Heart left ventricle (tissue), 16 donors: ENCODE measurements at regions of chr19 and their contacts with region 1.

Region 1: DNA sequence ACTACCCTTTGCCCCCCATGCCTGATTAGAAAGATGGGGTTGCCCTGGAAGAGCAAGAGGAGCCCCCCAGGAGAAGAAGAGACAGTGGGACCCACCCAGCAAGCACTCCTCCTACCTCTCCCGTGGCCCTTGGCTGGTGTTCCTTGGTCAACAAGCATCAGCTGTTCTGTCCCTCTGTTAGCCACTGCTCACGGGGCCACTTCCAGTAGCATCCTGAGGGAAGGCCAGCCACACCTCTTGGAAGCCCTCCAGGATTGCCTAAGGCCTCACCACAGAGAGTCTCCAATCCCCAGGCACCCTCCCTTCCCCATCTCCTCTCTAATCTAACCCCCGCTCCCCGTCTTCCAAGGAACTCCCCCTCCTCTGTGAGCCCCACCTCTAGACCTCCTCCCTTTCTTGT is 15.1 kb upstream of the DPP9 start:
- DNase-seq: no peak
- ATAC-seq: peak in 1 of 4 donors; percentile 27
- H3K4me3 ChIP-seq: no peak overlapping the region
- H3K27ac ChIP-seq: no peak overlapping the region
- H3K4me1 ChIP-seq: peaks cover 0 to 14% (median 0%) of the 10 kb centered on the region in 12 donors
- H3K27me3 ChIP-seq: no peaks in the 10 kb centered on the region
- CTCF ChIP-seq: no peak
- POLR2A ChIP-seq: no peak

Region 2: DNA sequence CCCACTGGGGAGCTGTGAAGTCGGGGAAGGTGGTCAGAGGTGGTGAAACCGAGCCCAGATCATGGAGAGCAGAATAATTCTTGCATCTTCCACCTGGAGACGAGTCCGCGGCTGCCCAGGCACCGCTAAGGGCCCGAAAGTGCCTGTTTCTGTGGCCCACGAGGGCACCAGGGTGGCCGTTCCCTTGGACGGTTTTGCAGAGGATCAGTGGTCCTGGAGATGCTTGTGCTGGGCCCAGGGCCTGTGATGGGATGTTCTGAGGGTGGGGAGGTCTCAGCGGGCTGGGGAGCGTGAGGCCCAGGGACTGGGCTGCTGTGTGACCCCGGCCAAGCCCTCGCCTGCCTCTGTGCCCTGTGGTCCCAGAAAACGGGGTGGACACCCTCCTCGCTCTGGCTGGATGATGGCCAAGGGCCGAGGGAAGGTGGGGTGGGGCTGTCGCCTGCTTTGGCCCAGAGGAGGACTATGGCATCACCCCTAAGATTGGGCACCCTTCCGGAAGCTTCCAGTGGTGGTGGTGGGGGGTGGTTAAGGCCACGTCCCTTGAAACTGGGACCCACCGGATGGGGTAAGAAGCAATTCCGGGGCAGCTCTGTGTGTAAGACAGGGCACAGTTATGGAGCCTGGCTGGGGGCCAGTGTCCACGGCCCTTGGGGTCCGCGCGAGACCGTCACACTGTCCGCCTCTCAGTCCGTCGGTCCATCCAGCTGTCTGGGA is 1423.6 kb before region 1 on chr19:
- intact Hi-C with region 1: no loop called
- DNase-seq: peak in 2 of 5 donors; percentile 17 to 26
- ATAC-seq: no peak
- H3K4me3 ChIP-seq: no peak overlapping the region
- H3K27ac ChIP-seq: no peak overlapping the region
- H3K4me1 ChIP-seq: no peaks in the 10 kb centered on the region
- H3K27me3 ChIP-seq: peaks cover 7 to 86% (median 33%) of the 10 kb centered on the region in 9 donors
- CTCF ChIP-seq: no peak
- POLR2A ChIP-seq: no peak

Region 3: DNA sequence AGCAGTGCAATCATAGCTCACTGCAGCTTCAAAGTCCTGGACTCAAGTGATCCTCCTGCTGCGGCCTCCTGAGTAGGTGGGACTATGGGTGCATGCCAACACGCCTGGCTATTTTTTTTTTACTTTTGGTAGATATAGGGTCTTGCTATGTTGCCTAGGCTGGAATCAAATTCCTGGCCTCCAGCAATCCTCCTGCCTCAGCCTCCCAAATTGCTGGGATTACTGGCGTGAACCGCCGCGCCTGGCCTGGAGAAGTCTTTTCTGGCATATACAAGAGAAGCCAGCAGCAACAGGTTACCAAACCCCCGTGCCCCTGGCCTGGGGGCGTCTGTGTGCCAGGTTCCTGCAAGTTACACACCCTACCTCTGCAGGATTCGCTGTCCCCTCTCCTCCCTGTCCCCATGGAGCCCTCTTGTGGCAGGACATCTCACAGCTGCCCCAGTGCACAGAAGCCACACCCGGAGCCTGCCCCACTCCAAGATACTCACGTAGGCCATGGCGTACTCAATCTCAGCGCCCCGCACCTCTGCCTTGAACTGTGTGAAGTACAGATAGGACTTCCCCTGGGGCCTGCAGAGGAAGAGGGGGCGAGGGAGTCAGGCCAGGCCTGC is 78.4 kb before region 1 on chr19:
- intact Hi-C with region 1: no loop called
- DNase-seq: peak in 2 of 5 donors; percentile 43 to 56
- ATAC-seq: peak in 3 of 4 donors; percentile 42 to 77 (median 46)
- H3K4me3 ChIP-seq: no peak overlapping the region
- H3K27ac ChIP-seq: no peak overlapping the region
- H3K4me1 ChIP-seq: no peaks in the 10 kb centered on the region
- H3K27me3 ChIP-seq: no peaks in the 10 kb centered on the region
- CTCF ChIP-seq: peak; percentile 16 to 46 (median 33)
- POLR2A ChIP-seq: no peak

Region 4: GRCh38 chr19:4851551-4852290 is 113.0 kb after region 1 on chr19:
- intact Hi-C with region 1: loop called in 1 of 10 experiments (anchors 5 kb)
- DNase-seq: peak; percentile 66 to 87 (median 69)
- ATAC-seq: peak; percentile 69 to 87 (median 83)
- H3K4me3 ChIP-seq: no peak overlapping the region
- H3K27ac ChIP-seq: no peak overlapping the region
- H3K4me1 ChIP-seq: no peaks in the 10 kb centered on the region
- H3K27me3 ChIP-seq: no peaks in the 10 kb centered on the region
- CTCF ChIP-seq: peak; percentile 80 to 89 (median 86)
- POLR2A ChIP-seq: no peak